ENCODE measurements at regions of chr7 and their contacts with region 1.

Region 1: DNA sequence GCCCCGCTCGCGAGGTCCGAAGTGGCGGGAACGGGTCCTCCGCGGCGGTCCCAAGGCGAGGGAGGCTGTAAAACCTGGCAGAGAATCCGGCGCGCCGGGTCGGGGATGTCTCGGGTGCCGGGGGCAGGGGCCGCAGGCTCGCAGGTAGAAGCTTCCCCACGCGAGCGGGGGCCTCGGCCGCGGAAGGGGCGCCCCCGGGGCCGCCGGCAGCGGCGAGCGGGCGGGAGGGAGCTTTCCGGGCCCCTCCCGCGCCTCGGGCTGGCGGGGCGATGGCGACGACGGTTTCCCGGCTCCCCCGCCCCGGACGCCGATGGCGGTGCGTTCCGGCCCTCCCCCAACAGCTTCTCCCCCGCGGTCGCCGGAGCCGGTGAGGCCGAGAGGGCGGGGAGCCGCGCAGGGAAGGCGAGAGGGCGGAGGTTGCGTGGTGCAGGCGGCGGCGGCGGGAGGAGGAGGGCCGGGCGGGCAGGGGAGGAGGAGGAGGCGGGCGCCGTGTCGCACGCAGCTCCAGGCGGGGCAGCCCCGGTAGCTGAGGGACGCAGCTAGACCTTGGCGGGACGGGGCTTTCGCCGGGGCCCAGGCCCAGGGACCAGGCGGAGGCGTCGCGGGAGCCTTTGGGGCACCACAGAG is at the start of gene CUL1:
- DNase-seq: peak; percentile 83
- H3K4me3 Mint-ChIP-seq: peak within 1 kb of the TSS; percentile 99
- H3K27ac Mint-ChIP-seq: peak within 1 kb of the TSS; percentile 97
- H3K4me1 Mint-ChIP-seq: peaks cover 59% of the 10 kb centered on the region
- H3K27me3 Mint-ChIP-seq: peaks cover 3% of the 10 kb centered on the region
- total RNA-seq, gene CUL1: 79.3 and 81.3 TPM in 2 replicates

Region 2: DNA sequence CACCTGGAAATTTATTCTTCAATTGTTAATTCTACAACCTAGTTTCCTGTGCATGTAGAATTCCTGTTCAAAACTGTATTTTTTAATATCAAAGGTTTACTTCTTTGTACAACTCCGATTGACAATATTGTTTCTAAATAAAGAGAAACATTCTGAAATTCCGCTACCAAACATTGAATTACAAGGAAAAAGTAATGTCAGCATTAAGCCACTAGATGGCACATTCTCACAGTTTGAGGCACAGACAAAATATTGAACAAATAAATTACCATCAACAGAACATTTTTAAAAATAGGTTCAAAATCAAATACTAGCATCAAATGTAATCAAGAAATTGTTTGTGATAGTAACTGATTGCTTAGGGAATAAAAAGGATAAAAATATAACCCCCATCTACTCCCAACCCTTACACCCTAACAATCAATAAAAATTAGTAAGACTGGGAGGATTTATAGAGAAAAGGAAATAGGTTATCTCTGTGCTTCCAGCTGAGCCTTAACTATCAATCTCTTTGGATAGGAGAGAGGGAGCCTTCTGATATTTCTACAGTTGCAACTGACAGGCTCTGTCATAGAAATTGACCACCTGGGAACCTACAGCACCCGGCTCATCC is 194.5 kb before region 1 on chr7:
- intact Hi-C with region 1: loop called (anchors 1 kb)
- DNase-seq: no peak
- H3K4me3 Mint-ChIP-seq: no peak overlapping the region
- H3K27ac Mint-ChIP-seq: no peak overlapping the region
- H3K4me1 Mint-ChIP-seq: peaks cover 7% of the 10 kb centered on the region
- H3K27me3 Mint-ChIP-seq: peaks cover 17% of the 10 kb centered on the region

Region 3: GRCh38 chr7:148584154-148584827 is 114.2 kb before region 1 on chr7:
- intact Hi-C with region 1: loop called (anchors 1 kb)
- DNase-seq: no peak
- H3K4me3 Mint-ChIP-seq: no peak overlapping the region
- H3K27ac Mint-ChIP-seq: no peak overlapping the region
- H3K4me1 Mint-ChIP-seq: peaks cover 24% of the 10 kb centered on the region
- H3K27me3 Mint-ChIP-seq: peaks cover 8% of the 10 kb centered on the region

Region 4: GRCh38 chr7:148727501-148728278 is 29.2 kb after region 1 on chr7:
- intact Hi-C with region 1: loop called (anchors 1 kb)
- DNase-seq: peak; percentile 9
- H3K4me3 Mint-ChIP-seq: peak overlapping the region; percentile 28
- H3K27ac Mint-ChIP-seq: peak overlapping the region; percentile 79
- H3K4me1 Mint-ChIP-seq: peaks cover 60% of the 10 kb centered on the region
- H3K27me3 Mint-ChIP-seq: no peaks in the 10 kb centered on the region

Region 5: GRCh38 chr7:148914208-148914777 is 215.8 kb after region 1 on chr7:
- intact Hi-C with region 1: loop called (anchors 1 kb)
- DNase-seq: peak; percentile 34
- H3K4me3 Mint-ChIP-seq: peak overlapping the region; percentile 77
- H3K27ac Mint-ChIP-seq: peak overlapping the region; percentile 94
- H3K4me1 Mint-ChIP-seq: peaks cover 63% of the 10 kb centered on the region
- H3K27me3 Mint-ChIP-seq: peaks cover 2% of the 10 kb centered on the region

Region 6: GRCh38 chr7:148987010-148987750 is 288.7 kb after region 1 on chr7:
- intact Hi-C with region 1: loop called (anchors 1 kb)
- DNase-seq: peak; percentile 78
- H3K4me3 Mint-ChIP-seq: peak overlapping the region; percentile 94
- H3K27ac Mint-ChIP-seq: peak overlapping the region; percentile 92
- H3K4me1 Mint-ChIP-seq: peaks cover 46% of the 10 kb centered on the region
- H3K27me3 Mint-ChIP-seq: peaks cover 21% of the 10 kb centered on the region